ENCODE measurements at regions of chr7 and their contacts with region 1.

Region 1: DNA sequence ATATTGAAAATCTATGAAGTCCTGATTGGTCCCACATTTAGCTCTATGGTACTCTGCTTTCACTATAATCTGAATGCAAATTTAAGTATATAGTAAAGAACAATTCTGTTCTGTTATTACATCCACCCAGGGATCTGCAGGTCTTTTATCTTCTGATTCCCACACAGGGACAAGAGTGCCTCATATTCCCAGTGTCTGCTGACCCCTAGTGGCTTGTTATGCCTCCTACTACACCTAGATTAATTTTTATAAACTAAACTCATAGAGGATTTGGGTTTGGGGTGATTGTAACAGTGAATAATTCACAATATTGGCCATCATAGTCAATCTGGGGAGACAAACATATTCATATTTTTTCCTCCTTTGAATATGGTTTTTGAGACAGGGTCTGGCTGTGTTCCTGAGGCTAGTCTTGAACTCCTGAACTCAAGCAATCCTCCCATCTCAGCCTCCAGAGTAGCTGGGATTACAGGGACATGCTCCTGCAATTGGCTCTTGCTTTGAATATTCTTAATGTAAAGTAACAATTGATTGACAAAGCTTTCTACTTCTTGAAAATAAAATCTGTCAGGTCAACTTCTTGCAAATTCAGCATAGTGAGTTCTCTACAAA is 282.1 kb downstream of the KCND2 start:
- DNase-seq: peak; percentile 71
- ATAC-seq: peak; percentile 95
- H3K4me3 ChIP-seq: no peak overlapping the region
- H3K27ac ChIP-seq: no peak overlapping the region
- H3K4me1 ChIP-seq: no peaks in the 10 kb centered on the region
- H3K27me3 ChIP-seq: no peaks in the 10 kb centered on the region
- CTCF ChIP-seq: peak; percentile 87

Region 2: DNA sequence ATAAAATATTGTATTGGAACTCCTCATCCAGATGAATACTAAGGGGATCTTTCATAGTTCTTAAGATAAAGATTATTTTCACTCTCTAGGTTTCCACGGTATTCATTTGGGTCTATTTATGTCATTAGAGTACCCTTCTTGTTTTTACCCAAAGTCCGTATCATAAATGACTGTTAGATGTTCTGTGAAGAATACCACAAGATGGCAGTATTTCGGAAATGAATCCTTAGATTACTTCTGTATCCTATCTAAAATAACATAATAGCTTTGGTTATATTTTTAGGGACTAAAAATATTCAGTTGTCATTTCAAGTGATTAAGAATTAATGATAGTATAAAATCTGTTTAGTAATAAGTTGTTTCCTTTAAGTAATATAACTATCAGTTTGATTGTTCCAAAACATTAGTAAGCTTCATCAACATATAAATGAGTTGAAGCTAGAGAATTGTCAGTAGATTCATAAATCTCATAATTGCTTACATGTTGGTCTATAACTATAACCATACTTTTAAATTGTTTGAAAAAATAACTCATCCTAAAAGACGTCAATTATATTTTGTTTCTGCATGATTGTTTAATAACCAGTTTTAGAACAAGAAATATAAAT is 619.5 kb before region 1 on chr7:
- CTCF ChIA-PET with region 1: no interaction called
- POLR2A ChIA-PET with region 1: no interaction called
- intact Hi-C with region 1: loop called (anchors 1 kb)
- DNase-seq: peak; percentile 60
- ATAC-seq: peak; percentile 80
- H3K4me3 ChIP-seq: no peak overlapping the region
- H3K27ac ChIP-seq: no peak overlapping the region
- H3K4me1 ChIP-seq: no peaks in the 10 kb centered on the region
- H3K27me3 ChIP-seq: no peaks in the 10 kb centered on the region
- CTCF ChIP-seq: peak; percentile 72

Region 3: DNA sequence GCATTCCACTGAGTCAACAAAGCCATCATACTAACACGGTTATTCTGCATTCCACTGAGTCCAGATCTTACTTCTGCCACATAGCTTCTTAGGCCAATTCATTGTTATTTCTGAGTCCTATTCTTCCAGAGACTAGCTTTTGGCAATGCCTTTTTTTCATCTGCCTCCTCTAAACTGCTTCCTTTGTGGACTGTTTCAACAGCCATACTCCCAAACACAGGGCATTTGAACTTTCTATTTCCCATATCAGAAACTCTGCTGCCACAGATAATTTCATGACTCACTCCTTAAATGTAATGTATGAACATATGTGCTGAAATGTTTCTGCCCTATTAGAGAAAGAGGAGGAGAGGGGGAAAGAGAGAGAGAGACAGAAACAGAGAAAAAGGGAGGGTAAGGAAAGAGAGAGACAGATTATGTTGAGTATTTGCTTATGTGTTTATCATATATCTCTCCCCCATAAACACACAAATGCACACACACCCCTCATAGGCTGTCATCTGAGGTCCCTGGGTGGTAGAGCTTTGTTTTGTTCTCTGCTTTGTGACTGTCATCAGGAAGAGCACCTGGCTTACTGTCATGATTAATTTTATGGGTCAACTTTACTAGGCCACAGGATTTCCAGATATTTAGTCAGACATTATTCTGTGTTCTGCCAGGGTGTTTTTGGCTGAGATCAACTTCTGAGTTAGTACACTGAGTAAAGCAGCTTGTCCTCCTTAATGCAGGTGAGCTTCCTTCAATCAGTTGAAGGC is 590.1 kb before region 1 on chr7:
- CTCF ChIA-PET with region 1: no interaction called
- POLR2A ChIA-PET with region 1: no interaction called
- intact Hi-C with region 1: no loop called
- DNase-seq: peak; percentile 64
- ATAC-seq: peak; percentile 87
- H3K4me3 ChIP-seq: no peak overlapping the region
- H3K27ac ChIP-seq: no peak overlapping the region
- H3K4me1 ChIP-seq: peaks cover 32% of the 10 kb centered on the region
- H3K27me3 ChIP-seq: no peaks in the 10 kb centered on the region
- CTCF ChIP-seq: no peak

Region 4: GRCh38 chr7:120272261-120272660 is 282.8 kb before region 1 on chr7:
- CTCF ChIA-PET with region 1: no interaction called
- POLR2A ChIA-PET with region 1: no interaction called
- intact Hi-C with region 1: loop called (anchors 1 kb)
- DNase-seq: peak; percentile 66
- ATAC-seq: peak; percentile 67
- H3K4me3 ChIP-seq: peak overlapping the region; percentile 72
- H3K27ac ChIP-seq: no peak overlapping the region
- H3K4me1 ChIP-seq: no peaks in the 10 kb centered on the region
- H3K27me3 ChIP-seq: peaks cover 7% of the 10 kb centered on the region
- CTCF ChIP-seq: peak; percentile 86

Region 5: GRCh38 chr7:120402079-120402767 is 152.8 kb before region 1 on chr7:
- CTCF ChIA-PET with region 1: no interaction called
- POLR2A ChIA-PET with region 1: no interaction called
- intact Hi-C with region 1: loop called (anchors 2 kb)
- DNase-seq: peak; percentile 71
- ATAC-seq: peak; percentile 74
- H3K4me3 ChIP-seq: peak overlapping the region; percentile 56
- H3K27ac ChIP-seq: peak overlapping the region; percentile 84
- H3K4me1 ChIP-seq: peaks cover 47% of the 10 kb centered on the region
- H3K27me3 ChIP-seq: no peaks in the 10 kb centered on the region
- CTCF ChIP-seq: no peak

Region 6: DNA sequence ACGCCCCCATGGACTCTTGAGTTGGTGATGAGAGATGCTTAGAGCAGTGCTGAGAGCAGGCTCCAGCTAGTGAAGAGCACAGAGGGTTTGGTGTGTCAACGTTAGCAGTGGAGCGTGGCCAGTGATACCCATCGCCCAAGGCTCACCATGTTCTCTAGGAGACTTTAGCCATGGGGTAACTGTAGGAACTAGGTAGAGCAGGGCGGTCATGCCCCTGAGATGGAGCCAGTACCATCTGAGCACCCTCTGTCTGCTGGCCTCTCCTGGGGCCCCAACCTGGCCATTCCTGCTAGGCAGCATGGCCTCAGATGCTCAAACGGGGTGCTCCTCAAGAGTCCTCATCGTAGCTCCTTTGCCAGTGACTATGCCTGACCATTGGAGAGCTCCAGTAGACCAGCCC is 102.4 kb before region 1 on chr7:
- CTCF ChIA-PET with region 1: no interaction called
- POLR2A ChIA-PET with region 1: no interaction called
- intact Hi-C with region 1: no loop called
- DNase-seq: no peak
- ATAC-seq: no peak
- H3K4me3 ChIP-seq: no peak overlapping the region
- H3K27ac ChIP-seq: no peak overlapping the region
- H3K4me1 ChIP-seq: no peaks in the 10 kb centered on the region
- H3K27me3 ChIP-seq: no peaks in the 10 kb centered on the region
- CTCF ChIP-seq: no peak

Region 7: GRCh38 chr7:120680985-120681384 is 125.9 kb after region 1 on chr7:
- CTCF ChIA-PET with region 1: no interaction called
- POLR2A ChIA-PET with region 1: no interaction called
- intact Hi-C with region 1: no loop called
- DNase-seq: no peak
- ATAC-seq: no peak
- H3K4me3 ChIP-seq: no peak overlapping the region
- H3K27ac ChIP-seq: no peak overlapping the region
- H3K4me1 ChIP-seq: no peaks in the 10 kb centered on the region
- H3K27me3 ChIP-seq: 0 out of 2 replicates have a peak, but pooled peaks cover 3% of the 10 kb centered on the region
- CTCF ChIP-seq: no peak